Motor neuron (in vitro differentiated cells): ENCODE measurements at regions of chr6 and their contacts with region 1.

Region 1: DNA sequence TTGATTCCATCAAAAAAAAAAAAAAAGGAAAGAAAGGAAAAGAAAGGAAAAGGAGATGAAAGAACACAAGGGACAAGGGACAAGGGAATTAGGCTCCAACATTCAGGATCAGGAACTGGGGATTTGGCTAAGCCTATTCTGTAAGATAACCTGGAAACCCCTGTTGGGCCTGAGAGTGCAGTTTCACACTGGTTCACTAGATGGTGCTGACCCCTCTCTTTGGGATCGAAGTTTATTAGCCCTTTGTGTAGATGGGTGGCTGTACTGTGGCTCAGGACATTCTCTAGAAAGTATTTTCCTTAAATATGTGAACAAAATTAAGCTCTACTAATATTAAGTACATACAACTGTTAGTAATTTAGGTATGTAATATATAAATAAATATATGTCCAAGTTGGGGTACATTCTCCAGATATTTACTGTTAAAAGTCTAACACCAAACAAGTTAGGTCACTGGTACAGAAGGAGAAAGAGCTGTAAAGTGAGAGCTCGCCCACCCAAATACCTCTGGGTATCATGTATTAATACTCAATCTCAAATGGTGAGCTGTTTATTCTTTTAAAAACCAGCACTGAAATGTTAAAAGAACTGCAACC is 6.3 kb downstream of the OR2A4 start:
- ATAC-seq: peak; percentile 60 to 99 (median 86)
- H3K4me3 ChIP-seq: no peak overlapping the region
- H3K27ac ChIP-seq: no peak overlapping the region
- H3K4me1 ChIP-seq: no peaks in the 10 kb centered on the region

Region 2: DNA sequence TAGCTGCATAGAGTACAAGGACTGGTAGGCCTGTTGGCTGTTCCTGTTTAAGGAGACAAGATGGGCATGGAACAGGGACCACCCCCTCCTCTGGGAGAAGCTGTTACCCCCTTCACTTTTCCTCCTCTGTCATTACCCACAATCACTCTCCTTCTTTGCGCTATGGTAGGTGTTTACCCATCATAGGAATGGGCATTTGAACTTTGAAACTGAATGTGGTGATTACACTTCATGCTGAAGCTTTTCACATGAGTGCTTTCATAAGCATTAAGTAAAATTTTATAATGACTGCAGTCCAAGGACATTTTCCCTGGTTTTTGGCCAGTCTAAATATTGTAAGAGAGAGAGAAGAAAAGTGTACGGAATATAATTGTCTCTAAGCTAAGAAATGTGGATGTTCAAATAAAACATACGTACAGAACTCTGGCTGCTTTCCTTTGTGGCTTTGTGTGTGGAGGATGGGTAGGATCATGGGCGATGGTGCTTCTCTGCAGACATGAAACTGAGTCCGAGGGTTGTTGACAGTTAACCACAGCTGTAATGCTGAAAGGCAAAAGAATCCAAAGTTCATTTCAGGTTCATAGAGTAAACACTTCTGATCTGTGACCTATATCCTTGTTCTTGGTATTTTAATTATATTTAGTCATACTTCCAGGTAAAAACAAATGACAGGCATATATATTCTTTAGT is 200.0 kb after region 1 on chr6:
- in situ Hi-C with region 1: loop called in 6 of 9 experiments (anchors 25 kb)
- ATAC-seq: peak in 1 of 8 experiments; percentile 52
- H3K4me3 ChIP-seq: no peak overlapping the region
- H3K27ac ChIP-seq: no peak overlapping the region
- H3K4me1 ChIP-seq: no peaks in the 10 kb centered on the region

Region 3: GRCh38 chr6:131909408-131910218 is 214.7 kb after region 1 on chr6:
- in situ Hi-C with region 1: loop called in 6 of 9 experiments (anchors 10 to 25 kb)
- ATAC-seq: peak; percentile 74 to 97 (median 84)
- H3K4me3 ChIP-seq: no peak overlapping the region
- H3K27ac ChIP-seq: no peak overlapping the region
- H3K4me1 ChIP-seq: peaks cover 0 to 6% of the 10 kb centered on the region in 2 donors